ENCODE measurements at regions of chr13 and their contacts with region 1.

Region 1: GRCh38 chr13:106151056-106151699 is 384.3 kb downstream of the EFNB2 start:
- DNase-seq: peak; percentile 79 to 99
- H3K4me3 ChIP-seq: no peak overlapping the region
- H3K27ac ChIP-seq: peak overlapping the region; percentile 94
- H3K4me1 ChIP-seq: peaks cover 48% of the 10 kb centered on the region
- H3K27me3 ChIP-seq: no peaks in the 10 kb centered on the region
- CTCF ChIP-seq: no peak

Region 2: DNA sequence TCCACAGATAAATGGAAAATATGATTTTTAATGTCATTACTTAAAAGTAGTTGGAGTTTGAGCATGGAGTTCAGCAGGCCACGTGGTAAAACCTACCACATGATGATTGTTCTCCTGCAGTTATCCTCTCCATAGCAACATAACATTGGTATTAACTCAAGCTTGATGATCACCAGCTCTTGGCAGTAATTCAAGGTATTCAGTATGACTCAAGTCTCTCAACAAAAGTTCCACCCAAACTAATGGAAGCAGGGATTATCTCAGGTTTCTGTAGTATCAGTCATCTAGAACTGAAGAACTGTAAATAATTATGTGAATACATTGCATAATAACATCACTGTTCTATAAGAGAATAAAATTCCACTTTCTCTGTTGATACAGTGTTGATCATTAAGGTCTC is 708.2 kb before region 1 on chr13:
- CTCF ChIA-PET with region 1: no interaction called
- POLR2A ChIA-PET with region 1: no interaction called
- intact Hi-C with region 1: loop called (anchors 1 kb)
- DNase-seq: peak; percentile 28 to 98
- H3K4me3 ChIP-seq: no peak overlapping the region
- H3K27ac ChIP-seq: peak overlapping the region; percentile 68
- H3K4me1 ChIP-seq: peaks cover 16% of the 10 kb centered on the region
- H3K27me3 ChIP-seq: no peaks in the 10 kb centered on the region
- CTCF ChIP-seq: no peak

Region 3: DNA sequence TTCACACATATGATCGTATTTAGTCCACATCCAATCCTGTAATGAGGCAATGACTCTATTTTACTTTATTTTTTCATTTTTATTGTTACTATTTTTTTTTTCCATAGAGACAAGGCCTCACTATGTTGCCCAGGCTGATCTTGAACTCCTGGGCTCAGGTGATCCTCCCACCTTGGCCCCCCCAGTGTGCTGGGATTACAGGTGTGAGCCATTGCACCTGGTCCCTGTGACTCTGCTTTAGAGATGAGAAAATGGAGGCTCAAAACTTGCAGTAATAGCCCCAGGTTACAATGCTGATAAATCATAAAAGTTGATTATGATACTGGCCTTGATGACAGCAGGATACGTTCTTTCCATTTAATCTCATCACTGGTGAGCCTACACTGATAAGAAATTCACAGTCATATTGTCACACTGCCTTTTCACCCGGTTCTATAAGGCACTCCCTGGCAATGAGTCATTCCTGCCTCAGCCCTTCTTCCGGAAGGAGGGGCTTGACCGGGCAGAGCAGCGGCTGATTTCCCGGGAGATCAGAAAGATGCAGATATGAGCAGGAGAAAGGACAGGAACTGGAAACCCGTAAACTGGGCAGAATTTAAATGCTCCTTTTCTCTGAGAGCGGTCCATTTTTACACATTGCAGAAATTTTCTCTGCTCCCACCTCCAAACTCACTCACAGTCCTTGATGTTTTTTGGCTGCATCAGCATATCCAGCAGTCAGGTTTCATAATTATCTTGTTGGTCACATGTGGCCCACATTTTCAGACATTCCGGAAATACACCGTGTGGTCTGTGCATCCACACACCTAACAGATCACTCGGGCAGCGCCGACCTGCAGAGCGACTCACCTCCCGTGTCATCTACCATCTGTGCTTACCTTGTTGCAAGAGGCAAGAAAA is 232.1 kb before region 1 on chr13:
- CTCF ChIA-PET with region 1: no interaction called
- POLR2A ChIA-PET with region 1: no interaction called
- intact Hi-C with region 1: loop called (anchors 1 kb)
- DNase-seq: peak; percentile 79 to 98
- H3K4me3 ChIP-seq: peak overlapping the region; percentile 47
- H3K27ac ChIP-seq: peak overlapping the region; percentile 99
- H3K4me1 ChIP-seq: peaks cover 40% of the 10 kb centered on the region
- H3K27me3 ChIP-seq: no peaks in the 10 kb centered on the region
- CTCF ChIP-seq: no peak

Region 4: GRCh38 chr13:105960326-105960725 is 190.9 kb before region 1 on chr13:
- CTCF ChIA-PET with region 1: no interaction called
- POLR2A ChIA-PET with region 1: no interaction called
- intact Hi-C with region 1: no loop called
- DNase-seq: no peak
- H3K4me3 ChIP-seq: no peak overlapping the region
- H3K27ac ChIP-seq: no peak overlapping the region
- H3K4me1 ChIP-seq: no peaks in the 10 kb centered on the region
- H3K27me3 ChIP-seq: no peaks in the 10 kb centered on the region
- CTCF ChIP-seq: no peak

Region 5: DNA sequence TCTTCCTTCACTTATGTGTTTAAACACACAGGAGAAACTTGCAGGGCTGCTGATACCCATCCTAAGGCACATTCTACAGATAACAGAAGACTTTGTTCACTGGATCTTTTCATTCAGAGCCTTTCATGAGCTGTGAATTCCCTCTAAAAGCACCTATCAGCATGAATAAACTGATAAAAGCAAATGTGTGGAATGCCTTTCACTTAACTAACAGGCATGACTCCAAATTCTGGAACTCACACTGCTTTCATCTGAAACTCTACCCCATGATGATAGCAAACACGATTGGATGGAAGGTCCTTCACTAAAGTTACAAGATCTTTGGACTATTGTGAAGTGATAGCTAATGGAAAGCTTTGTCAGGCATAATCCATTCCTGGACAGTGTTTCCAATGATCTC is 73.0 kb before region 1 on chr13:
- CTCF ChIA-PET with region 1: no interaction called
- POLR2A ChIA-PET with region 1: no interaction called
- intact Hi-C with region 1: no loop called
- DNase-seq: no peak
- H3K4me3 ChIP-seq: no peak overlapping the region
- H3K27ac ChIP-seq: no peak overlapping the region
- H3K4me1 ChIP-seq: no peaks in the 10 kb centered on the region
- H3K27me3 ChIP-seq: no peaks in the 10 kb centered on the region
- CTCF ChIP-seq: no peak

Region 6: DNA sequence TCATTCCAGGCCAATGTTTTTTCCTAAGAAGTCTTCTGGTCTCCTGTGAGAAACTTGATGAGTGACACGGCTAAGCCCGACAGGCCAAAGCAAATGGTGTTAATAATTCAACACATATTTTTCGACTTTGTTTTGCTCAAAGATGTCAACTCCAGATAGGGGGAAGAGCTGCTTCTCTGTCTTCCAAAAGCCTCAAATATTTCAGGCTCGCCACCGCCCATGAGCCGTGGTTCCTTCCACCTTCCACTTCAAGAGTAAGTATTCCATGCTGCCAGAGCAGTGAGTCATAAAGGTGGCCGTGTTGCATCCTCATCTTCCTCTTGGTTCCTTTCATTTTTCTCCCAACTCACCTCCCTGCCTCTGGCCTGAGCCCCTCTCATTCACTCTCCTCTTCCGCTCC is 111.7 kb after region 1 on chr13:
- CTCF ChIA-PET with region 1: no interaction called
- POLR2A ChIA-PET with region 1: no interaction called
- intact Hi-C with region 1: loop called (anchors 1 kb)
- DNase-seq: peak in 1 of 2 experiments; percentile 52
- H3K4me3 ChIP-seq: no peak overlapping the region
- H3K27ac ChIP-seq: no peak overlapping the region
- H3K4me1 ChIP-seq: no peaks in the 10 kb centered on the region
- H3K27me3 ChIP-seq: no peaks in the 10 kb centered on the region
- CTCF ChIP-seq: no peak

Region 7: GRCh38 chr13:106373989-106374572 is 222.9 kb after region 1 on chr13:
- CTCF ChIA-PET with region 1: no interaction called
- POLR2A ChIA-PET with region 1: no interaction called
- intact Hi-C with region 1: loop called (anchors 10 kb)
- DNase-seq: no peak
- H3K4me3 ChIP-seq: no peak overlapping the region
- H3K27ac ChIP-seq: no peak overlapping the region
- H3K4me1 ChIP-seq: peaks cover 21% of the 10 kb centered on the region
- H3K27me3 ChIP-seq: no peaks in the 10 kb centered on the region
- CTCF ChIP-seq: no peak

Region 8: GRCh38 chr13:106530171-106530851 is 379.1 kb after region 1 on chr13:
- CTCF ChIA-PET with region 1: no interaction called
- POLR2A ChIA-PET with region 1: interaction called, 6 read pairs
- intact Hi-C with region 1: loop called (anchors 1 kb)
- DNase-seq: peak; percentile 43 to 92
- H3K4me3 ChIP-seq: peak overlapping the region; percentile 72
- H3K27ac ChIP-seq: peak overlapping the region; percentile 83
- H3K4me1 ChIP-seq: peaks cover 53% of the 10 kb centered on the region
- H3K27me3 ChIP-seq: no peaks in the 10 kb centered on the region
- CTCF ChIP-seq: no peak